A549 (cell line): ENCODE measurements at regions of chr19 and their contacts with region 1.

Region 1: GRCh38 chr19:38335949-38336637 is 463 bp downstream of the CATSPERG start:
- DNase-seq: peak; percentile 99 to 100
- ATAC-seq: peak; percentile 82 to 92
- H3K4me3 ChIP-seq: peak overlapping the region; percentile 66
- H3K27ac ChIP-seq: peak overlapping the region; percentile 74 to 82
- H3K4me1 ChIP-seq: peaks cover 8% of the 10 kb centered on the region; the same call in 2 of the 3 replicates
- CTCF ChIP-seq: no peak
- EP300 ChIP-seq: no peak
- POLR2A ChIP-seq: no peak
- RAD21 ChIP-seq: no peak

Region 2: DNA sequence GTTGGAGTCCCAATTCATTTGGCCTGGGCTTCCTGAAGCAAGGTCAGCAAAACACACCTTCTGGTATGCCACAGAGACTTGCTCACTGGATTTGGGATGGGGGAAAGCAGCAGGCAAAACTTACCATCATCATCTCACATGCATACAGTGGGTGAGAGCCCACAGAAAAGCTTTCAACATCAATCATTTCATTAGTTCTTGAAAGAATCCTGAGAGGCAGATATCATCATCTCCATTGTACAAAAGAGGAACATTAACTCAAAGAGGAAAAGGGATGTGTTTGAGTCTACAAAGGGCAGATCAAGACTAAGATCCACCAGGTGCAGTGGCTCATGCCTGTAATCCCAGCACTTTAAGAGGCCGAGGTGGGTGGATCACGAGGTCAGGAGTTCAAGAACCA is 436.1 kb before region 1 on chr19:
- CTCF ChIA-PET with region 1: interaction called, 19 read pairs
- POLR2A ChIA-PET with region 1: interaction called, 3 read pairs
- DNase-seq: no peak
- ATAC-seq: no peak
- H3K4me3 ChIP-seq: no peak overlapping the region
- H3K27ac ChIP-seq: no peak overlapping the region
- H3K4me1 ChIP-seq: no peaks in the 10 kb centered on the region
- CTCF ChIP-seq: no peak
- EP300 ChIP-seq: no peak
- POLR2A ChIP-seq: no peak
- RAD21 ChIP-seq: no peak

Region 3: GRCh38 chr19:37979547-37980082 is 356.5 kb before region 1 on chr19:
- CTCF ChIA-PET with region 1: no interaction called
- POLR2A ChIA-PET with region 1: no interaction called
- DNase-seq: no peak
- ATAC-seq: peak; percentile 4 to 19; a peak in 3 of 6 replicates
- H3K4me3 ChIP-seq: no peak overlapping the region
- H3K27ac ChIP-seq: peak overlapping the region in 1 of 2 experiments; percentile 57; a peak in 3 of 6 replicates
- H3K4me1 ChIP-seq: peaks cover 13% of the 10 kb centered on the region
- CTCF ChIP-seq: no peak
- EP300 ChIP-seq: no peak
- POLR2A ChIP-seq: no peak
- RAD21 ChIP-seq: no peak

Region 4: DNA sequence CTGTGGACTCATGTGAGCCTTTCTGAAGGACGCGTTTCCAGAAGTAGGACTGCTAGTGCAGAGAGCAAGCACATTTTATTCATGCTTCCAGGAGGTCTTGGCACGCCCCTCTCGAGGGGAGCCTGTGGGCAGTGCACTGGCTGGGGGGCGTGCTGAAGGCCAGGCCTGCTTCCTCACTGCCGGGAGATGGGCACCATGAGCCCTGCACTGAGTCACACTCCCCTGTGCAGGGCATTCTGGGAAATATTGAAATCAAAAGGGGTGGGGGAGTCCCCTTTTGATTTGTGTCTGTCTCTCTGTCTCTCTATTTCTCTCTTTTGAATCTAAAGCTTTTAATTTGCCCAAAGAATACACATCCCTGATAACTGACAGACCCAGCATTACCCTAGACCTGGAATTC is 146.0 kb before region 1 on chr19:
- CTCF ChIA-PET with region 1: no interaction called
- POLR2A ChIA-PET with region 1: no interaction called
- DNase-seq: no peak
- ATAC-seq: peak in 1 of 2 experiments; percentile 36; a peak in 3 of 6 replicates
- H3K4me3 ChIP-seq: no peak overlapping the region
- H3K27ac ChIP-seq: 0 out of 6 replicates have a peak overlapping the region, but pooled peaks of 1 of the 2 experiments have one; percentile 4
- H3K4me1 ChIP-seq: peaks cover 25% of the 10 kb centered on the region
- CTCF ChIP-seq: no peak
- EP300 ChIP-seq: no peak
- POLR2A ChIP-seq: no peak
- RAD21 ChIP-seq: no peak

Region 5: GRCh38 chr19:38245826-38246498 is 90.1 kb before region 1 on chr19:
- CTCF ChIA-PET with region 1: interaction called, 1,052 read pairs
- POLR2A ChIA-PET with region 1: no interaction called
- DNase-seq: no peak
- ATAC-seq: no peak
- H3K4me3 ChIP-seq: no peak overlapping the region
- H3K27ac ChIP-seq: no peak overlapping the region
- H3K4me1 ChIP-seq: peaks cover 3% of the 10 kb centered on the region; the same call in 2 of the 3 replicates
- CTCF ChIP-seq: no peak
- EP300 ChIP-seq: no peak
- POLR2A ChIP-seq: no peak
- RAD21 ChIP-seq: no peak

Region 6: GRCh38 chr19:38284422-38284821 is 51.7 kb before region 1 on chr19:
- CTCF ChIA-PET with region 1: interaction called, 11 read pairs
- POLR2A ChIA-PET with region 1: no interaction called
- DNase-seq: no peak
- ATAC-seq: no peak
- H3K4me3 ChIP-seq: no peak overlapping the region
- H3K27ac ChIP-seq: no peak overlapping the region
- H3K4me1 ChIP-seq: peaks cover 7% of the 10 kb centered on the region; the same call in 1 of the 3 replicates
- CTCF ChIP-seq: no peak
- EP300 ChIP-seq: no peak
- POLR2A ChIP-seq: no peak
- RAD21 ChIP-seq: no peak

Region 7: GRCh38 chr19:38315657-38316476 is 20.2 kb before region 1 on chr19 and contains the start of gene YIF1B:
- CTCF ChIA-PET with region 1: interaction called, 76 read pairs
- POLR2A ChIA-PET with region 1: no interaction called
- DNase-seq: peak; percentile 100
- ATAC-seq: peak; percentile 87 to 93
- H3K4me3 ChIP-seq: peak within 1 kb of the TSS; percentile 62
- H3K27ac ChIP-seq: peak within 1 kb of the TSS; percentile 76 to 85
- H3K4me1 ChIP-seq: peaks cover 10% of the 10 kb centered on the region; the same call in 2 of the 3 replicates
- CTCF ChIP-seq: no peak
- EP300 ChIP-seq: no peak
- POLR2A ChIP-seq: peak; percentile 63
- RAD21 ChIP-seq: no peak; a peak in 2 of 5 replicates
- polyA plus RNA-seq, gene YIF1B: 75.5 and 88.1 TPM in 2 replicates

Region 8: GRCh38 chr19:38351865-38352395 is 15.8 kb after region 1 on chr19:
- CTCF ChIA-PET with region 1: interaction called, 29 read pairs
- POLR2A ChIA-PET with region 1: no interaction called
- DNase-seq: no peak
- ATAC-seq: peak; percentile 61 to 64; a peak in 5 of 6 replicates
- H3K4me3 ChIP-seq: no peak overlapping the region
- H3K27ac ChIP-seq: no peak overlapping the region
- H3K4me1 ChIP-seq: no peaks in the 10 kb centered on the region
- CTCF ChIP-seq: no peak
- EP300 ChIP-seq: no peak
- POLR2A ChIP-seq: no peak
- RAD21 ChIP-seq: no peak; a peak in 1 of 5 replicates

Region 9: GRCh38 chr19:38387550-38388348 is 51.7 kb after region 1 on chr19 and contains the start of gene GGN:
- CTCF ChIA-PET with region 1: interaction called, 10 read pairs
- POLR2A ChIA-PET with region 1: interaction called, 4 read pairs
- DNase-seq: peak; percentile 98 to 100
- ATAC-seq: peak; percentile 53 to 78
- H3K4me3 ChIP-seq: peak within 1 kb of the TSS; percentile 61
- H3K27ac ChIP-seq: peak within 1 kb of the TSS; percentile 71 to 90
- H3K4me1 ChIP-seq: peaks cover 35% of the 10 kb centered on the region
- CTCF ChIP-seq: no peak
- EP300 ChIP-seq: no peak
- POLR2A ChIP-seq: no peak; the same call in 1 of the 2 replicates
- RAD21 ChIP-seq: no peak
- polyA plus RNA-seq, gene GGN: not detected in 2 replicates

Region 10: DNA sequence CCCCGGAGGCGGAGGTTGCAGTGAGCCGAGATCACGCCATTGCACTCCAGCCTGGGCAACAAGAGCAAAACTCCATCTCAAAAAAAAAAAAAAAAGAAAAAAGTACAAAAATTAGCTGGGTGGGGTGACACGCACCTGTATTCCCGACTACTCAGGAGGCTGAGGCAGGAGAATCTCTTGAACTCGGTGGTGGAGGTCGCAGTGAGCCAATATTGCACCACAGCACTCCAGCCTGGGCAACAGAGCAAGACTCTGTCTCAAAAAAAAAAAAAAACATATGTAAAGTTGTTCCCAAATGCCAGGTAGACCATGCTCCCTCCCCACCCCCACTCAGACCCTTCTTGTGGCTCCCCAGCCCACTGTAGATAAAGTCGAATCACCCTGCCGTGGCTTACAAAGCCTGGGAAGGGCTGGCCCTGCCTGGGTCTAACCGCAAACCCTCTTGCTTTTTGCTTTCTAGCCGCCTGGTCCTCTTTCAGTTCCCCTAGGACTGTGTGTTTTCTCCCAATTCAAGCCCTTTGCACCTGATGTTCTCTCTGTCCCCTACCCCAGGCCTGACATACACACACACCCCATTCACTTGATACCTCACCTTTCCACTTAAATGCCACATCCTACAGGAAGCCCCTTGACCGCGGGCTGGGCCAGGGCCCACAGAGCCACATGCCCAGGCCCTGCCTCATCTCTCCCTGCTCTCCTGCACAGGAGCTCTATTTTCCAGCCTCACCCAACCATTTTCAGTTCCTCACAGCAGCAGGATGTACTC is 247.3 kb after region 1 on chr19:
- CTCF ChIA-PET with region 1: no interaction called
- POLR2A ChIA-PET with region 1: no interaction called
- DNase-seq: no peak
- ATAC-seq: peak; percentile 41 to 51
- H3K4me3 ChIP-seq: no peak overlapping the region
- H3K27ac ChIP-seq: no peak overlapping the region
- H3K4me1 ChIP-seq: no peaks in the 10 kb centered on the region
- CTCF ChIP-seq: no peak
- EP300 ChIP-seq: no peak
- POLR2A ChIP-seq: no peak
- RAD21 ChIP-seq: no peak